MCF 10A (cell line): ENCODE measurements at regions of chr1 and their contacts with region 1.

Region 1: GRCh38 chr1:201593200-201593921 is 54.4 kb downstream of the NAV1 start:
- DNase-seq: peak; percentile 100
- H3K4me3 Mint-ChIP-seq: peak overlapping the region; percentile 39
- H3K27ac Mint-ChIP-seq: peak overlapping the region; percentile 21
- H3K4me1 Mint-ChIP-seq: peaks cover 59% of the 10 kb centered on the region
- H3K27me3 Mint-ChIP-seq: peaks cover 10% of the 10 kb centered on the region
- CTCF ChIP-seq: no peak

Region 2: DNA sequence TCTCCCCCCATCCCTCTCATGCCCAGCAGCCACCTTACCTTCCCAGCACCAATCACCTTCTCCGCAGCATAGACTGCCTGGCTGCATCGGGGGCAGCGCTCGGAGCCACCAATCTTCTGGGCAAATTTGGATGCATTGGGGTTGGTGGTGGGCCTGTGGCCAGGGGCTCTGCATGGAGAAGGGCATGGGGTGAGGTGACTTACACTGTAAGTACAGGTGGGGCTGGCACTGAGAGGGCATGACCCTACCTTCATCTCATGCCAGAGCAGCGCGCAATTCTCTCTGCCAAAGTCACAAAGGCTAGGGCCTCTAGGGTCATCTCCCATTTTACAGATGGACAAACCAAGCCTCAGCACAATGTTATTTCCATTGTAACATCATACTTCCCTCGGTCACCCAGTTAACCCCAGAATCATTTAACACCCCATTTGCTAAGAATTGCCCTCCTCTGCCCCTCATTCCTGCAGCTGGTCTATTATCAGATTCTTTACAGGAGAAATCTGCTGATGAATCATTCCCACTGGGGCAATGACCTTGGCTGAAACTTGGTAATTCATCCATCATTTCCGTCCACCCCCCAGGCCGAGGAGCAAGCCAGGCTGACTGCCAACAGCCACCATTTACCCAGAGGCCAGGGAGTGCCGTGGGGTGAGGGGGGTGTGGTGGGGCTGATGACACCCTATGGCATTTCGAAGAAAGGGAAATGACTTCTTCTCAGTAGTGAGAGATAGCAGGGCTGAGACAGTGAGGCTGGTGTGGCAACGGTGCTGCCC is 104.4 kb before region 1 on chr1:
- CTCF ChIA-PET with region 1: no interaction called
- POLR2A ChIA-PET with region 1: no interaction called
- intact Hi-C with region 1: no loop called
- DNase-seq: peak; percentile 100
- H3K4me3 Mint-ChIP-seq: peak overlapping the region; percentile 40
- H3K27ac Mint-ChIP-seq: peak overlapping the region; percentile 95
- H3K4me1 Mint-ChIP-seq: peaks cover 54% of the 10 kb centered on the region
- H3K27me3 Mint-ChIP-seq: no peaks in the 10 kb centered on the region
- CTCF ChIP-seq: no peak

Region 3: GRCh38 chr1:201582705-201583442 is 10.5 kb before region 1 on chr1:
- CTCF ChIA-PET with region 1: interaction called, 4 read pairs
- POLR2A ChIA-PET with region 1: interaction called, 13 read pairs
- intact Hi-C with region 1: no loop called
- DNase-seq: peak; percentile 60
- H3K4me3 Mint-ChIP-seq: no peak overlapping the region
- H3K27ac Mint-ChIP-seq: no peak overlapping the region
- H3K4me1 Mint-ChIP-seq: peaks cover 28% of the 10 kb centered on the region
- H3K27me3 Mint-ChIP-seq: peaks cover 12% of the 10 kb centered on the region
- CTCF ChIP-seq: no peak

Region 4: GRCh38 chr1:201649761-201650622 is 56.6 kb after region 1 on chr1:
- CTCF ChIA-PET with region 1: no interaction called
- POLR2A ChIA-PET with region 1: interaction called, 17 read pairs
- intact Hi-C with region 1: loop called (anchors 1 kb)
- DNase-seq: peak; percentile 85
- H3K4me3 Mint-ChIP-seq: peak overlapping the region; percentile 80
- H3K27ac Mint-ChIP-seq: peak overlapping the region; percentile 79
- H3K4me1 Mint-ChIP-seq: peaks cover 15% of the 10 kb centered on the region
- H3K27me3 Mint-ChIP-seq: no peaks in the 10 kb centered on the region
- CTCF ChIP-seq: no peak

Region 5: DNA sequence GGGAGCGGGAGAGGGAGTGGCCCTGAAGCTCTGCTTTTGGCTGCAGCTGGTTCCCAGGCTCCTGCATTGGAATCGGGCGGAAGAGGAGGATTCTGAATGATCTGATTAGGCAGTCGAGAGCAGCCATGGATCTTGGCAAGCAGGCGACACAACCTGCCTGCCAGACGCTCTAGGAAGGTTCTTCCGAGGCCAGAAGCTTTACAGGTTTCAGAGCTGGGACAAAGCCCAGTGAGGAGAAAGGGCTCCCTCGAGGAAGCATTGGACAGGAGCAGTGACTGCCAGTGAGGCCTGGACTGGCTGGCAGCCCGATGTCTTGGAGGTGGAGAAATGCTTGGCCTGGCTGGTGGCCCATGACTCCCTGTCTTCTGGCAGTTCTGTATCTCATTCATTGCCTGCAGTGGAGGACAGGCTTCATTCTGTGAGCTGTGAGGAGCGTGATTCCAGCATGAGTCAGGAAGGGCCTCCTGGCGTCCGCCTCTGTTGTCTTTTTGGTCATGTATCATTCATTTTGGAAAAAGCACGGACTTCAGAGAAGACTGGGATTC is 102.9 kb after region 1 on chr1:
- CTCF ChIA-PET with region 1: interaction called, 4 read pairs
- POLR2A ChIA-PET with region 1: interaction called, 4 read pairs
- intact Hi-C with region 1: loop called (anchors 1 kb)
- DNase-seq: peak; percentile 100
- H3K4me3 Mint-ChIP-seq: peak overlapping the region; percentile 28
- H3K27ac Mint-ChIP-seq: peak overlapping the region; percentile 44
- H3K4me1 Mint-ChIP-seq: peaks cover 32% of the 10 kb centered on the region
- H3K27me3 Mint-ChIP-seq: no peaks in the 10 kb centered on the region
- CTCF ChIP-seq: peak; percentile 6